Pancreas (tissue), 10 donors: ENCODE measurements at regions of chr12 and their contacts with region 1.

Region 1: DNA sequence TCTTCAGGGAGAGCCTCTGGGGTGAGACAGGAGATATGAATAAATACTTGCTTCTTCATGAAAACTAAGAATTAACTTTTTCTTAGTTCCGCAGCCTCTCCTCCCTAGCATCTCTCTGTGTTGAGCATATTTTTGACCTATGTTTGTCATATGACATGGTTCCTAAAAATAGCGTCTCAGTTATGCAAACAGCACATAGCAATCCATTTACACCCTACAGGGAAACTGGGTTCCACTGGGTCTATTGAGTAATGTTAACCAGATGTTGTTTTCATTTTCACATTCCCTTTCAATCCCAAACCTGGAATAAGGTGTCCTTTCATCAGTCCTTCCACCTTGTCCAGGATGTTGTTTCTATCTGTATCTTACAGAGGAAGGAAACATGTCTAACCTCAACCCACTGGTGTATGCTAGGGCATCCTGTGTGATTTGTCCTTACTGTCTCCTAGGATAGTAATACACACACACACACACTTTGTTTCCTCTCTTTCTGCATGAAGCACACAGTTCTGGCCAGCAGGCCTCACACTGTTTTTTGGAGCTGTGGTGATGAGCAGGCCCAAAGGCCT is 1543.5 kb downstream of the AACS start:
- DNase-seq: no peak
- ATAC-seq: peak; percentile 43 to 80 (median 70)
- H3K4me3 ChIP-seq: no peak overlapping the region
- H3K27ac ChIP-seq: peak overlapping the region in 2 of 4 donors; percentile 60 to 71
- H3K4me1 ChIP-seq: peaks cover 0 to 13% (median 0%) of the 10 kb centered on the region in 3 donors
- H3K27me3 ChIP-seq: no peaks in the 10 kb centered on the region
- CTCF ChIP-seq: no peak

Region 2: DNA sequence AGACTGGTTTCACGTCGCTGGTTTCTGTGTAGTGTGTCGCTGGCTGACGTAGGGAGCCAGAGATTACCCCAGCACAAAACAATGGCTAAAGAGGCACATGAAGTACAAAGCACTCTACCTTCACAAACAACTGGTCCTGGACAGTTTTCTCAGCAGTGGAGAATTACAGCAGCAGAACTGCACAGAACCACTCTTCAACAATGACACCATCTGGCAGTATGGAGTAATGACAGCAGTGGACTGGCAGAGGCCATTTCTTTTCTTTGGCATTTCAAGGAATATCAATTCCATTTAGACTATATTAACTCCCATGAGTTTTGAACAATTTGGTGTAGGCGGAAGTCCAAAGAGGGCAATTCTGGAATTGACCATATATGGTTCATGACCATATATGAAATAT is 469.3 kb before region 1 on chr12:
- intact Hi-C with region 1: no loop called
- DNase-seq: no peak
- ATAC-seq: no peak
- H3K4me3 ChIP-seq: no peak overlapping the region
- H3K27ac ChIP-seq: no peak overlapping the region
- H3K4me1 ChIP-seq: no peaks in the 10 kb centered on the region
- H3K27me3 ChIP-seq: no peaks in the 10 kb centered on the region
- CTCF ChIP-seq: no peak

Region 3: GRCh38 chr12:126389220-126389841 is 219.4 kb before region 1 on chr12:
- intact Hi-C with region 1: loop called in 1 of 3 experiments (anchors 10 kb)
- DNase-seq: no peak
- ATAC-seq: no peak
- H3K4me3 ChIP-seq: no peak overlapping the region
- H3K27ac ChIP-seq: no peak overlapping the region
- H3K4me1 ChIP-seq: peaks cover 0 to 12% (median 11%) of the 10 kb centered on the region in 3 donors
- H3K27me3 ChIP-seq: no peaks in the 10 kb centered on the region
- CTCF ChIP-seq: no peak